Activated T-helper 1 cell treated with anti-CD3 and anti-CD28 coated beads, Interleukin-12 subunit alpha, Interleukin-12 subunit beta, Interleukin-2, Interleukin-4 antibody, amounts not matched to agents 30 ng/mL and 10 ng/mL and 1 ng/mL, durations not matched to agents 14 hours and 24 hours and 36 hours (primary cell): ENCODE measurements at regions of chr1 and their contacts with region 1.

Region 1: GRCh38 chr1:229258031-229258756 is 12.7 kb upstream of the RAB4A start:
- DNase-seq: peak; percentile 23
- H3K4me3 Mint-ChIP-seq: no peak overlapping the region
- H3K27ac Mint-ChIP-seq: no peak overlapping the region
- H3K4me1 Mint-ChIP-seq: peaks cover 29% of the 10 kb centered on the region
- H3K27me3 Mint-ChIP-seq: peaks cover 11% of the 10 kb centered on the region

Region 2: GRCh38 chr1:228734881-228735801 is 523.1 kb before region 1 on chr1 and contains the start of gene RHOU:
- intact Hi-C with region 1: loop called (anchors 1 kb)
- DNase-seq: peak; percentile 65
- H3K4me3 Mint-ChIP-seq: peak within 1 kb of the TSS; percentile 84
- H3K27ac Mint-ChIP-seq: no peak within 1 kb of the TSS
- H3K4me1 Mint-ChIP-seq: peaks cover 27% of the 10 kb centered on the region
- H3K27me3 Mint-ChIP-seq: peaks cover 40% of the 10 kb centered on the region
- total RNA-seq, gene RHOU: 0.49 and 0.69 TPM in 2 replicates

Region 3: GRCh38 chr1:229341774-229342655 is 83.8 kb after region 1 on chr1:
- intact Hi-C with region 1: loop called (anchors 1 kb)
- DNase-seq: peak; percentile 82
- H3K4me3 Mint-ChIP-seq: peak overlapping the region; percentile 89
- H3K27ac Mint-ChIP-seq: peak overlapping the region; percentile 87
- H3K4me1 Mint-ChIP-seq: peaks cover 50% of the 10 kb centered on the region
- H3K27me3 Mint-ChIP-seq: peaks cover 21% of the 10 kb centered on the region

Region 4: DNA sequence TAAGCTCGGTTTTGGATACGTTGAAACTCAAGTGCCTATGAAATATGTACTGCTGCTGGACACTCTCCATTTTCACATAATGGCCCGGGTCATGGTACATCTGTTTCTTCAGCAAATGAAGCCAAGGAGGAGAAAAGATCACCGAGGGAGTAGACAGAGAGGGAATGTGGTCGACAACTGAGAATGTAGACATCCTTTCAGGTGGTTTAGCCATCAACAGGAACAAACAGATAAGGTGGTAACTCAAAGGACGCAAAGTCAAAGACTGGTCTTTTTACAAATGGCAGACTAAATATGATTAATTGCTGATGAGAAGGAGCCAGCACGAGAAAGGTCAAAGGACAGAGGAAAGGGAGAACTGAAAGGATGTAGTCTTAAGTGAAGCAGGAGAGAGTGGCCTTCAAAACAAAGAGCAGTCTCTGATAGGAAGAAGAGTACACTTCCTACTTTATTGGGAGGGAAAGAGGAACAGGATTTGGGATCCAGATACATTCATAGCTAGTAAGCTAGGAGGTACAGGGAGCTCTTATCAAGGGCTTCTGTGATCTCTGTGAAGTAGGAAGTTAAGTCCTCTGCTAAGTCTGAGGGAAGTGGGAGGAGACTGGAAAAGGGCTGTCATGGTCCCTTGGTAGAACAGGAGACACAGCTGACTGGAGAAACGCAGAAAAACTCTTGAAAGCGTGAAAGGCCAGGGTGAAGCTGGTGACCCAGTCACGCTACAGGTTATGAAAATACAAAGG is 221.6 kb after region 1 on chr1:
- intact Hi-C with region 1: loop called (anchors 1 kb)
- DNase-seq: no peak
- H3K4me3 Mint-ChIP-seq: no peak overlapping the region
- H3K27ac Mint-ChIP-seq: no peak overlapping the region
- H3K4me1 Mint-ChIP-seq: peaks cover 17% of the 10 kb centered on the region
- H3K27me3 Mint-ChIP-seq: no peaks in the 10 kb centered on the region

Region 5: GRCh38 chr1:229558571-229559335 is 300.6 kb after region 1 on chr1 and contains the start of gene ABCB10:
- intact Hi-C with region 1: loop called (anchors 5 kb)
- DNase-seq: peak; percentile 81
- H3K4me3 Mint-ChIP-seq: peak within 1 kb of the TSS; percentile 90
- H3K27ac Mint-ChIP-seq: peak within 1 kb of the TSS; percentile 83
- H3K4me1 Mint-ChIP-seq: peaks cover 49% of the 10 kb centered on the region
- H3K27me3 Mint-ChIP-seq: no peaks in the 10 kb centered on the region
- total RNA-seq, gene ABCB10: 46.2 and 47.0 TPM in 2 replicates